H1 (cell line): ENCODE measurements at regions of chr1 and their contacts with region 1.

Region 1: DNA sequence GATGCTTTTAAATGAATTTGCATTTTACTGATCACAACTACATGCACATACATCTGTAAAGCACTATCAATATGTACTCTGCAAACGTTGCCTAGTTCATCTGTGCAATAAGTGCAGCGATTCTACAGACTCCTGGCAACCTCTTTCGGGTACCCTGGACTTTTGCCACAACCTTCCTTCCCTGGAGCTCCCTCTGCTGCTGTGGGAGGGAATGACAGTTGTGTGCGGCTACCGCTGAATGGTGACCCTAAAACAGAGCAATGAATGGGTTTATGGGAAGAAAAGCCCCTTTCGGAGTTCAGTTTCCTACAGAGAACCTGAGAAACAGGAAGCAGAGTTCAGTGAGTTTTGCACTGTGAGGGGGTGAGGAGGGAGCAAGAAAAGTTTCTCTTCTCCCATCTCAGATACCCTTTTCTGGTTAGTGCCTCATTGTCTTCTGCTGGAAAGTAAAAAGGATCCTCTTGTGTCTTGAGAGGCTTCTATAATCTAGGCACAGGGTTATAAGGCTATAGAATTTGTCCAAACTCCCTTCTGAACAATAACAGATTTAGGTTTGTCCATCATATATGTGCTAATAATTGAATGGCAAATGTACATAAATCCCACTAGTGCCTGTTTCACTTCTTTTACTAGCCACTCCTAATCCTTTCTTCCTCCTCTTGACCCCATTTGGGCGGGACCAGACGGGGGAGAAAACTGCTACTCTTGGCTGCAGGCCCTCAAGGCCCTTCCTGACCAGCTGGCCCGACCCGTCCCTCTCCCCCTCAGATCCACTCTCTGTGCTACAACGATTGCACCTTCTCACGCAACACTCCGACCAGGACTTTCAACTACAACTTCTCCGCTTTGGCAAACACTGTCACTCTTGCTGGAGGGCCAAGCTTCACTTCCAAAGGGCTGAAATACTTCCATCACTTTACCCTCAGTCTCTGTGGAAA is 19.8 kb upstream of the SARS1 start:
- DNase-seq: peak in 1 of 2 experiments; percentile 92
- H3K4me3 ChIP-seq: no peak overlapping the region
- H3K27ac ChIP-seq: no peak overlapping the region
- H3K4me1 ChIP-seq: peaks cover 0 to 2% (median 0%) of the 10 kb centered on the region in 4 experiments; a peak in 1 of 7 replicates
- H3K27me3 ChIP-seq: no peaks in the 10 kb centered on the region
- CTCF ChIP-seq: peak; percentile 79 to 87 (median 84)
- EP300 ChIP-seq: no peak
- POLR2A ChIP-seq: no peak
- RAD21 ChIP-seq: peak; percentile 74 to 84

Region 2: DNA sequence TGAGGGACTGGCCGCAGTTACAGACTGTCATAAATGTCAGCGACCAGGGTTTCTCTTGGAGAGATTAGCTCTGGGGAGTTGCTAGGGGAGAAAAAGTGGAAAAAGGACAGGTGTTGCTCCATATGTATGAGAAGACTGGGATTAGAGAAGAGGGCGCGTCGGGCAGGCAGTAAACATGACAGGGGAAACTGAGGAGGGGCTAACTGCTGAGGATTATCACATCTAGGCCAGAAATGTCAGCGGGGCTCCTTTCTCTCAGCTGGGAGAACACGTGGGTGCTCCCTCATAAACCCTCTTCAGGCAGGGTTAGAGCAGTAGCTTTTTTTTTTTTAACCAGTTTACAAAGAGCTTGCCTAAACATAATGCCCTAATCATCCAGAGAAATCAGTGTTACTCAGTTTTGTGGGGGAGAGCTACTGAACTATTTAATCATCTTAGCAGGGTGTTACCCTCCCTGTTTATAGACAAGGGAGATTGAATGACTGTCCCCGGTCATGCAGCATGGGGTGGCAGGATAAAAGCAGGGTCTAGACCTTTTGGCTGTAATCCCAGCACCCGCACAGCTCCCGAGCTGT is 44.8 kb before region 1 on chr1:
- CTCF ChIA-PET with region 1: interaction called, 11 read pairs
- POLR2A ChIA-PET with region 1: no interaction called
- DNase-seq: no peak
- H3K4me3 ChIP-seq: no peak overlapping the region
- H3K27ac ChIP-seq: no peak overlapping the region
- H3K4me1 ChIP-seq: peaks cover 0 to 3% (median 2%) of the 10 kb centered on the region in 4 experiments; a peak in 3 of 7 replicates
- H3K27me3 ChIP-seq: no peaks in the 10 kb centered on the region
- CTCF ChIP-seq: no peak
- EP300 ChIP-seq: no peak
- POLR2A ChIP-seq: no peak
- RAD21 ChIP-seq: no peak

Region 3: GRCh38 chr1:109181105-109181806 is 12.7 kb before region 1 on chr1:
- CTCF ChIA-PET with region 1: interaction called, 24 read pairs
- POLR2A ChIA-PET with region 1: interaction called, 5 read pairs
- DNase-seq: no peak
- H3K4me3 ChIP-seq: no peak overlapping the region
- H3K27ac ChIP-seq: no peak overlapping the region
- H3K4me1 ChIP-seq: peaks cover 0 to 3% (median 0%) of the 10 kb centered on the region in 4 experiments; a peak in 1 of 7 replicates
- H3K27me3 ChIP-seq: no peaks in the 10 kb centered on the region
- CTCF ChIP-seq: no peak
- EP300 ChIP-seq: no peak
- POLR2A ChIP-seq: no peak
- RAD21 ChIP-seq: no peak

Region 4: GRCh38 chr1:109239580-109240095 is 45.7 kb after region 1 on chr1:
- CTCF ChIA-PET with region 1: interaction called, 651 read pairs
- POLR2A ChIA-PET with region 1: interaction called, 10 read pairs
- DNase-seq: peak; percentile 65 to 75
- H3K4me3 ChIP-seq: no peak overlapping the region
- H3K27ac ChIP-seq: peak overlapping the region; percentile 13; the same call in 1 of the 2 replicates
- H3K4me1 ChIP-seq: peaks cover 21 to 44% (median 31%) of the 10 kb centered on the region in 4 experiments
- H3K27me3 ChIP-seq: no peaks in the 10 kb centered on the region
- CTCF ChIP-seq: peak; percentile 78 to 91 (median 89)
- EP300 ChIP-seq: 0 out of 3 replicates have a peak, but pooled peaks of 1 of the 2 experiments have one; percentile 3
- POLR2A ChIP-seq: no peak
- RAD21 ChIP-seq: peak; percentile 29 to 60